Psoas muscle (tissue), 8 donors: ENCODE measurements at regions of chr2 and their contacts with region 1.

Region 1: DNA sequence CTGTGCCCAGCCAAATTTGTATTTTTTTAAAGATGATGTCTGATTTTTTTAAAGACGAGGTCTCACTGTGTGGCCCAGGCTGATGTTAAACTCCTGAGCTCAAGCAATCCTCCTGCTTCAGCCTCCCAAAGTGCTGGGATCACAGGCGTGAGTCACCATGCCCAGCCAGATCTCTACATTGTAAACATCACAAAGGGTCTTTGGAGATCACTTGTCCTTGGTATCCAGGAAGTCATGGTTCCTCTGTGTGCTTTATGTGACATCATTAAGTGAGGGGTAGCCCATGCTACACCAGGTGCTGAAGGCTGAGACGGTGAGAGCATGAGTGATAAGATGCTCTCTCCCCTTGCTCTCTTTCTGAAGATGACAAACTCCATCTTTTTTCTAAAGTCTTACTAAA is 7.0 kb upstream of the NUP35 start:
- DNase-seq: no peak
- ATAC-seq: no peak
- H3K4me3 ChIP-seq: no peak overlapping the region
- H3K27ac ChIP-seq: no peak overlapping the region
- H3K4me1 ChIP-seq: no peaks in the 10 kb centered on the region
- H3K27me3 ChIP-seq: no peaks in the 10 kb centered on the region
- CTCF ChIP-seq: no peak

Region 2: DNA sequence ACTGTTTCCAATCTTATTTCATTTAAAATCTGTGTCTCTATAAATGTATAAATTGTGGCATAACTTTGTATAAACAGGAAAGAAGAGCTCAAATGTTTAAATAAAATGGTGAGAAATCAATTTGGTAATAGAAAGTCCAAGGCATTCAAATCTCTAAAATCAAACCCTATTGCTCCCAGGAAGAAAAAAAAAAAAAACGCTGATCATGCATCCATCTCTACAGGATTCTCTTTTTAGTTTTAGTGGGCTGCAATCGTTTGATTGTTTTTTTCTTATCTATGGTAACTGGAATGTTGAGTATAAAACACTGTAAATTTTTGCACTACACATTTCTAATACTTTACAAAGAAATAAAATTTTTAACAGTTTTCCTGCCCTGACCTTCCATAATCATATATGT is 154.6 kb before region 1 on chr2:
- intact Hi-C with region 1: no loop called
- DNase-seq: no peak
- ATAC-seq: no peak
- H3K4me3 ChIP-seq: no peak overlapping the region
- H3K27ac ChIP-seq: no peak overlapping the region
- H3K4me1 ChIP-seq: peaks cover 8% of the 10 kb centered on the region
- H3K27me3 ChIP-seq: no peaks in the 10 kb centered on the region
- CTCF ChIP-seq: no peak

Region 3: GRCh38 chr2:183049420-183049819 is 67.8 kb before region 1 on chr2:
- intact Hi-C with region 1: loop called in 1 of 2 experiments (anchors 10 kb)
- DNase-seq: no peak
- ATAC-seq: no peak
- H3K4me3 ChIP-seq: no peak overlapping the region
- H3K27ac ChIP-seq: no peak overlapping the region
- H3K4me1 ChIP-seq: no peaks in the 10 kb centered on the region
- H3K27me3 ChIP-seq: no peaks in the 10 kb centered on the region
- CTCF ChIP-seq: no peak

Region 4: DNA sequence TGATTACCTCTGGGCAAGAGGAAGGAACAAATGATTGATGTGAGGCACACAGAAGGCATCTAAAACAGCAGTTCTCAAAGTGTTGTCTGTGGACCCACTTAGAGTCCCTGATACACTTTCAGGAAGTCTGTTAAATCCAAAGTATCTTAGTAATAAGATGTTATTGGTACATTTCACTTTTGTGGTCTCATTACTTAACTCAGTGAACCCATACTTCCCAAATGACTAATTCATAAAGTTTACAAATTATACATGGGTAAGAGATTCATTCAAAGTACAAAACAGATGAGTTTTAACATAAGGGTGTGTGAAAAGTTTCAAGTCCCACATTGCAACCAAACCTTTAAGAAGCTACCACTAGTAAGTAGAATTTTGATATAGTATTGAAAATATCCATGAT is 447.5 kb after region 1 on chr2:
- intact Hi-C with region 1: no loop called
- DNase-seq: no peak
- ATAC-seq: no peak
- H3K4me3 ChIP-seq: no peak overlapping the region
- H3K27ac ChIP-seq: no peak overlapping the region
- H3K4me1 ChIP-seq: no peaks in the 10 kb centered on the region
- H3K27me3 ChIP-seq: no peaks in the 10 kb centered on the region
- CTCF ChIP-seq: no peak